ENCODE measurements at regions of chr5 and their contacts with region 1.

Region 1: DNA sequence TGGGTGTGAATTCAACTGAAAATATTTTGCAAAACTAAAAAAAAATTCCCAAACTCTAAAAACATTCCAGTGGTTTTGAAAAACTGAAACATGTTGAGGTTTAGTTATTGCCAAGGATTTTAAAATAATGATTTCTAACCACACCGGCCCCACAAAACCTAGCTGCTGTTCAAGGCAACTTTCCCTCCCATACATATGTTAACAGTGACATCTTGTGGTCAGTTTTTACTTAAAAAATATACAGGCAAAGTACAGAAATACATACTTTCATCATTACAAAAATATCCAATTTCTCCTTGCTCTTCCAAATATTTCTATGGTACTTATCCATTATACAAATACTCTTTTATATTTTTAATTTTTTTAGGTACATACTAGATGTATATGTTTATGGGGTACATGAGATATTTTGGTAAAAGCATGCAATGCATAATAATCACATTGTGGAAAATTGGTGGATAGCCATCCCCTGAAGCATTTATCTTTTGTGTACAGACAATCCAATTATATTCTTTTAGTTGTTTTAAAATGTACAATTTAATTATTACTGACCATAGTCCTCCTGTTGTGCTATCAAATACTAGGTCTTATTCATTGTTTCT is 34.4 kb upstream of the MRPS30 start:
- DNase-seq: peak in 1 of 2 experiments; percentile 37
- H3K4me3 ChIP-seq: no peak overlapping the region
- H3K4me3 Mint-ChIP-seq: no peak overlapping the region
- H3K27ac Mint-ChIP-seq: no peak overlapping the region
- H3K4me1 ChIP-seq: no peaks in the 10 kb centered on the region
- H3K4me1 Mint-ChIP-seq: no peaks in the 10 kb centered on the region
- H3K27me3 ChIP-seq: no peaks in the 10 kb centered on the region
- H3K27me3 Mint-ChIP-seq: no peaks in the 10 kb centered on the region
- CTCF ChIP-seq: peak; percentile 49 to 69

Region 2: GRCh38 chr5:44497606-44498005 is 276.8 kb before region 1 on chr5:
- CTCF ChIA-PET with region 1: no interaction called
- POLR2A ChIA-PET with region 1: no interaction called
- intact Hi-C with region 1: loop called (anchors 1 kb)
- DNase-seq: no peak
- H3K4me3 ChIP-seq: no peak overlapping the region
- H3K4me3 Mint-ChIP-seq: no peak overlapping the region
- H3K27ac Mint-ChIP-seq: no peak overlapping the region
- H3K4me1 ChIP-seq: no peaks in the 10 kb centered on the region
- H3K4me1 Mint-ChIP-seq: no peaks in the 10 kb centered on the region
- H3K27me3 ChIP-seq: no peaks in the 10 kb centered on the region
- H3K27me3 Mint-ChIP-seq: no peaks in the 10 kb centered on the region
- CTCF ChIP-seq: no peak

Region 3: DNA sequence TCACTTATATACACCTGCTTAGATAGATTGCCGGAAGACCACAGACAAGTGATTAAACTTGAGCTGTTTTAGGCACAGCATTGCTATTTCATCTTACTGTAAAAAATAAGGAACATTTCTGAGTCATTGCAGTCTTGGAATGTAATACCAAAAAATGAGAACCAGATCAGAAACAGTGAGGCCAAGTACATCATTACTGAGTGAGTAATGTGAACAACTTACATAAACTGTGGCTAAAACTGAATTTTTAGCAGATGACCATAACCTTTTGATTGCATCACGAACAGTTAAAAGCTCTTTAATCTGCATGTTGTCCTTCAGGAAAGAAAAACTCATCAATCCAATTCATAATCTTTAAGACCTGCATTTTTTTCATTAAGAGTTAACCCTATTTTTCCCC is 228.1 kb before region 1 on chr5:
- CTCF ChIA-PET with region 1: no interaction called
- POLR2A ChIA-PET with region 1: no interaction called
- intact Hi-C with region 1: no loop called
- DNase-seq: no peak
- H3K4me3 ChIP-seq: no peak overlapping the region
- H3K4me3 Mint-ChIP-seq: no peak overlapping the region
- H3K27ac Mint-ChIP-seq: no peak overlapping the region
- H3K4me1 ChIP-seq: no peaks in the 10 kb centered on the region
- H3K4me1 Mint-ChIP-seq: no peaks in the 10 kb centered on the region
- H3K27me3 ChIP-seq: no peaks in the 10 kb centered on the region
- H3K27me3 Mint-ChIP-seq: no peaks in the 10 kb centered on the region
- CTCF ChIP-seq: no peak

Region 4: GRCh38 chr5:44808435-44809214 is 34.2 kb after region 1 on chr5 and contains the start of gene MRPS30:
- CTCF ChIA-PET with region 1: no interaction called
- POLR2A ChIA-PET with region 1: no interaction called
- intact Hi-C with region 1: no loop called
- DNase-seq: peak; percentile 94 to 97
- H3K4me3 ChIP-seq: peak within 1 kb of the TSS; percentile 76
- H3K4me3 Mint-ChIP-seq: peak within 1 kb of the TSS; percentile 98
- H3K27ac Mint-ChIP-seq: peak within 1 kb of the TSS; percentile 95
- H3K4me1 ChIP-seq: 0 out of 2 replicates have a peak, but pooled peaks cover 3% of the 10 kb centered on the region
- H3K4me1 Mint-ChIP-seq: no peaks in the 10 kb centered on the region
- H3K27me3 ChIP-seq: no peaks in the 10 kb centered on the region
- H3K27me3 Mint-ChIP-seq: no peaks in the 10 kb centered on the region
- CTCF ChIP-seq: peak; percentile 19 to 61
- total RNA-seq, gene MRPS30: 62.2 and 65.3 TPM in 2 replicates